CD8-positive, alpha-beta T cell (primary cell): ENCODE measurements at regions of chr20 and their contacts with region 1.

Region 1: DNA sequence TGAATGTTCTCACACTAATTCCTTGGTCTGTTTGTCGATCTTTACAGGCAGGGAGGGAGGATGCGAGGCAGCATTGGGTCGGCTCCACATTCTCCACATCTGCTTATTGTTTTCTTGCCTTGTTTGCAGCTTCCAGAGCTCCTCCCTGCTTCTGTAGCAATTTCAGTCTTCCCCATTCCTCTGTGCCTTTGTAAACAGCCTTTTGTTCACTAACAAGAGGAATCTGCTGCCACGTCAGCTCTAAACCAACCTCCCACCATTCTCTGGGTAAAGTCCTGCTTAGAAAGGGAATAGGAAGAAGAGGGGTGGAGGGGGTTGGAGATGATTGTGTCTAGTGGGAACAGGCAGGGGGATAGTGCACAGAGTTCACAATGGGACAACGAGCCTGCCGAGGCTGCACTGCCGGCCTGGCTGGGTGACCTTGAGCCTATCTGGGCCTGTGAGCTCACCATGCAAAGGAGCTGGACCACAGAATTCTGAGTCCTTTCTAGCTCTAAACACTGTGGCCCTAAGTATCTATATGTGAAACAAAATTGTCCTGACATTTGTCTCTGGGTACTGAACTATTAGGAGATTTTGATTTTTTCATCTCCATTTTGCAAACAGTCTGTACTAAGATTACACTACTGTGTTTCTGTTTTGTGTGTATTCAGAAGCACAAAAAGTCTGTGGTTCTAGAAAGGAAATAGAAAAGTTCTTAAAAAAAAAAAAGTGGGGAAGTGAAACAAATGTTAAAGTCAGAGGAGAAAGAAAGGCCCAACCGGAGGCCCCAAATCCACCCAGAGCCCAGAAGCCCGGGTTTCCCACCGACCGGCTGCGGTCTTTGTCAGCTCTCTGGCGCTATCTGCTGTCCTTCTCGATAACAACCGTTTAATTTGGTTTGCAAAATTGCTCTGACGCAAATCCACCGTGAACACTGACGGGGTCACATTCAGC is 1.4 kb upstream of the PRND start:
- DNase-seq: peak; percentile 55 to 86 (median 76)
- ATAC-seq: peak; percentile 97
- H3K4me3 ChIP-seq: no peak overlapping the region
- H3K4me3 Mint-ChIP-seq: no peak overlapping the region
- H3K27ac ChIP-seq: peak overlapping the region in 1 of 2 experiments; percentile 1
- H3K27ac Mint-ChIP-seq: peak overlapping the region; percentile 56
- H3K4me1 ChIP-seq: peaks cover 10% of the 10 kb centered on the region
- H3K4me1 Mint-ChIP-seq: peaks cover 9% of the 10 kb centered on the region
- H3K27me3 ChIP-seq: no peaks in the 10 kb centered on the region
- H3K27me3 Mint-ChIP-seq: peaks cover 3% of the 10 kb centered on the region
- CTCF ChIP-seq: peak; percentile 89

Region 2: DNA sequence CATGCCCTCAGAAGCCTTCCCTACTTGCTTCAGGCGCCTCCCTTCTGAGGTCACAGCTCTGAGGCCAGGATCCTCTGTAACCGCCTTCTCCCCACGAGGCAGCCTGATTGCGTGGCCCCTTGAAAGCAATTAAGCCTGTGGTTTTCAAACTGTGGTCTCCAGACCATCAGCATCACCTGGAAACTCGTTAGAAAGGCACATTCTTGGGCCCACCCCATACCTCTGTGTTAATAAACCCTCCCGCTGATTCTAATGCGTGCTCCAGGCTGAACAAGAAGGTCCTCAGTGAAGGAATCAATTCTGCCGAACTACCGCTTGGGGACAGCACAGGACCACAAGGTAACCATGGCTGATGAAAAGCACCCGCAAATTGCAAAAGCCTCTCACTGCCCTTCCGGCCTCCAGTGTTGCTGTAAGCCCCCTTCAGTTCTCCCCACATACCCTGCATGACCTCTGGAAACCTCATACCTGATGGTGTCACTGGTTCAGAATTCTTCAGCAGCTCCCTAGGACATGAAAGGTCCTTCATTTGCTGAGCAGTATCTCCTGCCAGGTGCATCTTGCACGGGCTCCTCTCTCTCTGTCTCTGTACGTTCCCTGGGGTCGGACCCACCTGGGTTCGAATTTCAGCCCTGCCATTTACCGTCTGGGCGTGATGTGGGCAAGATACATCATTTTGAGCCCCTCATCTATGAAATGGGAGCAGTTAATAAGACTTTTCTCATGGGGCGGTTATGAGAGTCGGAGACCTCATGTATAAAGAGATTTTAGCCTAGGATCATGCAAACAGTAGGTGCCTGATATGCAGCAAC is 611.6 kb before region 1 on chr20:
- CTCF ChIA-PET with region 1: no interaction called
- POLR2A ChIA-PET with region 1: no interaction called
- intact Hi-C with region 1: loop called in 1 of 2 experiments (anchors 2 kb)
- DNase-seq: peak; percentile 26 to 79 (median 62)
- ATAC-seq: peak; percentile 82
- H3K4me3 ChIP-seq: no peak overlapping the region
- H3K4me3 Mint-ChIP-seq: no peak overlapping the region
- H3K27ac ChIP-seq: no peak overlapping the region
- H3K27ac Mint-ChIP-seq: no peak overlapping the region
- H3K4me1 ChIP-seq: no peaks in the 10 kb centered on the region
- H3K4me1 Mint-ChIP-seq: peaks cover 4% of the 10 kb centered on the region
- H3K27me3 ChIP-seq: peaks cover 0 to 3% of the 10 kb centered on the region in 2 experiments
- H3K27me3 Mint-ChIP-seq: peaks cover 5% of the 10 kb centered on the region
- CTCF ChIP-seq: peak; percentile 85

Region 3: DNA sequence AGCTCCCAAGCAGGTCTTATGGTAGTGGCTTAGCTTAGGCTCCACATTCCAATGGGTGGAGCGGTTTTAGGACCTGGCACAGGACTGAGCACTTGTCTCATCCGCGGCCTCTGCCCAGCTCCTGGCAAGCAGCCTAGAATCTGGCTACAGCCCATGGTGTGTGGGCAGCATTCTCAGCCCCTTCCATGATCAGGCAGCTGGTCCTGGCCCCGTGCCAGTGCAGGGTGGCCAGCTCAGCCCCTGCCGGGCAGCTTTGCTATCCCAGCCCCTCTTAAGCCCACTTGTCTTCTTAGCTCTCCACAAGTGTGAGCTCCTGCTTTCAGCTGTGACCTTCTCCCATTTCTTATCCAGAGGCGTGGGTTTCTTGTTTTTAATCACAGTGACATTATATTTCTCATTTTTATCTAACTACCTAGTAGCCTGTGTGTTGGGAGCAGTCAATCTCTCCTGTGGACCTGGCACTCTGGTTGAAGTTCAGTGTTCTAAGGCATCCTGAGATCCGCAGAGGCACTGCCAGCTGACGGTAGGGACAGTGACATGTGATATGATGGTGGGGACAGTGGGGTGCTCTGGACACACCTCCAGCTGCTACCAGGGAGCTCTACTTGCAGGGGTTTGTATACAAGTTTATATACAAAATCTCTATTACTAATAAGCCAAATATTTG is 118.5 kb before region 1 on chr20:
- CTCF ChIA-PET with region 1: interaction called, 255 read pairs
- POLR2A ChIA-PET with region 1: no interaction called
- intact Hi-C with region 1: no loop called
- DNase-seq: no peak
- ATAC-seq: no peak
- H3K4me3 ChIP-seq: no peak overlapping the region
- H3K4me3 Mint-ChIP-seq: no peak overlapping the region
- H3K27ac ChIP-seq: no peak overlapping the region
- H3K27ac Mint-ChIP-seq: no peak overlapping the region
- H3K4me1 ChIP-seq: no peaks in the 10 kb centered on the region
- H3K4me1 Mint-ChIP-seq: no peaks in the 10 kb centered on the region
- H3K27me3 ChIP-seq: no peaks in the 10 kb centered on the region
- H3K27me3 Mint-ChIP-seq: peaks cover 52% of the 10 kb centered on the region
- CTCF ChIP-seq: no peak

Region 4: GRCh38 chr20:4607287-4607713 is 113.0 kb before region 1 on chr20:
- CTCF ChIA-PET with region 1: interaction called, 255 read pairs
- POLR2A ChIA-PET with region 1: no interaction called
- intact Hi-C with region 1: loop called (anchors 1 kb)
- DNase-seq: peak; percentile 29 to 77 (median 61)
- ATAC-seq: peak; percentile 88
- H3K4me3 ChIP-seq: no peak overlapping the region
- H3K4me3 Mint-ChIP-seq: no peak overlapping the region
- H3K27ac ChIP-seq: no peak overlapping the region
- H3K27ac Mint-ChIP-seq: no peak overlapping the region
- H3K4me1 ChIP-seq: no peaks in the 10 kb centered on the region
- H3K4me1 Mint-ChIP-seq: peaks cover 1% of the 10 kb centered on the region
- H3K27me3 ChIP-seq: no peaks in the 10 kb centered on the region
- H3K27me3 Mint-ChIP-seq: peaks cover 31% of the 10 kb centered on the region
- CTCF ChIP-seq: peak; percentile 99

Region 5: DNA sequence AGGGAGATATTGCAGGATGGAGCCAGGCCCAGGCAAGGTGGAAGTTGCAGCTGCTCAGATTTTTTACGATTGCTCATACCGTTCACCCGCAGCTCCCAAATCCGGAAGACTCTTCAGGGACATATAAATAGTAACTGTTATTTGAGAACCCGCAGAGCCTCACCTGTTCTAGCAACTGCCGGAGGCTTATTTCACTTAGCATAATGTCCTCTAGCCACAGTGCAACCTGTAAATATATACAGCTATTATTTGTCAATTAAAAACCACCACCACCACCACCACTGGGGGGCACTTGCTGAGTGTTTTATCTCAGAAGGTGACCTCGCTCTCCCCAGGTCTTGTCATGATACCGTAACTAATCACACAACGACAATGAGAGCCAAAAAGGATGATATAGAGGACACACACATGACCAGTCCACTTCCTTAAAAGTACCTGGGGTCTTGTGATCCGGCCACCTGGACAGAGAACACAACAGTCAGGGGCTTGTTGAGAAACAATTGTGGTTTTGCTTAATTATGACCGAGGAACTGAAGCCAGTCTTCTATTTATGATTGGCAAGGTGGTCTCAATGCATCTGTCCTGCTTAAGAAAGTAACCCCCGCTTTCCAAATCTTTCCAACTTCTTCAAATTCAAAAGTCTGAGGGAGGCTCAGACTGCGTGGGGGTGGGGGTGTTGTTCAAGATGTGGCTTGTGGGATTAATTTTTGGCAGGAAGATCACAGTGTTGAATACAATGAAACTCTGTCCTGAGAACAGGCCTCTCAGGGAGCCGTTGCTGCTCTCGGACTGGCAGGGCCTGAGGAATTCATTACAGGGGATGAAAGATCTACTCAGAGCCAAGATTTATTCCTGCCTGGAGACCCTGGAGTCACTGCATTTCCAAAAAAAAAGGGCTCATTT is 106.3 kb before region 1 on chr20:
- CTCF ChIA-PET with region 1: interaction called, 255 read pairs
- POLR2A ChIA-PET with region 1: no interaction called
- intact Hi-C with region 1: loop called (anchors 1 kb)
- DNase-seq: peak; percentile 37 to 76 (median 69)
- ATAC-seq: peak; percentile 79
- H3K4me3 ChIP-seq: no peak overlapping the region
- H3K4me3 Mint-ChIP-seq: no peak overlapping the region
- H3K27ac ChIP-seq: no peak overlapping the region
- H3K27ac Mint-ChIP-seq: no peak overlapping the region
- H3K4me1 ChIP-seq: no peaks in the 10 kb centered on the region
- H3K4me1 Mint-ChIP-seq: peaks cover 2% of the 10 kb centered on the region
- H3K27me3 ChIP-seq: no peaks in the 10 kb centered on the region
- H3K27me3 Mint-ChIP-seq: peaks cover 2% of the 10 kb centered on the region
- CTCF ChIP-seq: peak; percentile 58

Region 6: DNA sequence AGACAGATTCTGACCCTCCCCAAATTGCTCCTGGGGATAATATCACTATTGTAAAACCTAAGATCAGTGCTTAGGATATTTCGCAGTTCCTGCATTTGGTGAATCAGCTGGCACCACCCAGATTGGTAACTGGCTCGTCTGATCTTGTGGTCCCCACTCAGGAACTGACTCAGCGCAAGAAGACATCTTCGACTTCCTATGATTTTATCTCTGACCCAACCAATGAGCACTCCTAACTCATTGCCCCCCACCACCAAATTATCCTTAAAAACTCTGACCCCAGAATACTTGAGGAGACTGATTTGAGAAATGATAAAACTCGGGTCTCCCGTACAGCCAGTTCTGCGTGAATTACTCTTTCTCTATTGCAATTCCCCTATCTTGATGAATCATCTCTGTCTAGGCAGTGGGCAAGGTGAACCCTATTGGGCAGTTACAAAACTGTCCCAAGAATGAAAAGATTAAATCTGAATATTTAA is 54.3 kb before region 1 on chr20:
- CTCF ChIA-PET with region 1: interaction called, 3 read pairs
- POLR2A ChIA-PET with region 1: no interaction called
- intact Hi-C with region 1: loop called in 1 of 2 experiments (anchors 2 kb)
- DNase-seq: peak in 8 of 9 experiments; percentile 40 to 74 (median 60)
- ATAC-seq: peak; percentile 83
- H3K4me3 ChIP-seq: peak overlapping the region in 1 of 2 experiments; percentile 26
- H3K4me3 Mint-ChIP-seq: peak overlapping the region; percentile 56
- H3K27ac ChIP-seq: peak overlapping the region; percentile 24 to 69
- H3K27ac Mint-ChIP-seq: peak overlapping the region; percentile 46
- H3K4me1 ChIP-seq: peaks cover 9% of the 10 kb centered on the region
- H3K4me1 Mint-ChIP-seq: peaks cover 19% of the 10 kb centered on the region
- H3K27me3 ChIP-seq: no peaks in the 10 kb centered on the region
- H3K27me3 Mint-ChIP-seq: peaks cover 2% of the 10 kb centered on the region
- CTCF ChIP-seq: no peak